Activated CD8-positive, alpha-beta memory T cell treated with anti-CD3 and anti-CD28 coated beads, Interleukin-2, amount 10 ng/mL, durations not matched to agents 7 days and 5 days (primary cell): ENCODE measurements at regions of chr17 and their contacts with region 1.

Region 1: DNA sequence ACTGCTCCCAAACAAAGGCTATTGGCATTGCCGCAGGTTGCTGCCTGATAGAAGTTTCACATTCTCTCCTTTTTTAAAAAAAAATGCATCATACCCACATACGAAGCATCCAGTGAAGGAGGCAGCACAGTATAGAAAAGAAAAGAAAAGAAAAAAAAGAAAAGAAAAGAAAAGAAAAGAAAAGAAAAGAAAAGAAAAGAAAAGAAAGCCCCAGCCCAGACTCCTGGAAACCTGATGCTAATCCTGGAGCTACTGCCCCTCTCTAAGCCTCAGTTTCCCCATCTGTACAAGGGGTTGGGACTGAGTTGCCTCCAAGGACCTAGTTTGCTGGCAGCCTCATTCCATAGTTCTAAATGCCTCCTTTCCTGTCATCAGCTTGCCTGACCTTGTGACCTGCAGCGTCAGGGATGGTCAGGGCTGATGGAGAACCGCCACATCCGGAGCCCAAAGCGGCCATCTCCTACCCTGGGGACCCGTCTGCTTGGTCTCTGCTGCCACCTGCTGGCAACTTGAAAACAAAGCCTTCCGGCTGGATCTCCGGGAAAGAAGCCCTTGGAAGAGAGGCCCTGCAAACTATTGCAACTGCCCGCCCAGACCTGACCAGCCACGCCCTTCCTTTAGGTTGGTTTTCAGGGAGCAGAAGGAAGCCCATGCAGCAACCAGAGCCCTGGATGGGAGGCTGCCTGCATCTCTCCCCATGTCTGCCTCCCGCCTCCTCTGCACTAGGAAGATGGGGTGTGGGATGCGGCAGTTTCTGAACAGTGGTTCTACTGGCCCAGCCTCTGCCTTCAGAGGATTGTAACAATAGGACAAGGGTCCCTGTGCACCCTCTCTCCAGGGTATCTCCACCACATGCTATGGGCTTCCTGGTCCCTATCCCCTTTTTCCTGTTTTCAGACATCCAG is 13.0 kb downstream of the AIPL1 start:
- DNase-seq: peak; percentile 83
- ATAC-seq: peak; percentile 76
- H3K4me3 Mint-ChIP-seq: no peak overlapping the region
- H3K27ac Mint-ChIP-seq: no peak overlapping the region
- H3K4me1 Mint-ChIP-seq: peaks cover 7% of the 10 kb centered on the region
- H3K27me3 Mint-ChIP-seq: peaks cover 63% of the 10 kb centered on the region

Region 2: DNA sequence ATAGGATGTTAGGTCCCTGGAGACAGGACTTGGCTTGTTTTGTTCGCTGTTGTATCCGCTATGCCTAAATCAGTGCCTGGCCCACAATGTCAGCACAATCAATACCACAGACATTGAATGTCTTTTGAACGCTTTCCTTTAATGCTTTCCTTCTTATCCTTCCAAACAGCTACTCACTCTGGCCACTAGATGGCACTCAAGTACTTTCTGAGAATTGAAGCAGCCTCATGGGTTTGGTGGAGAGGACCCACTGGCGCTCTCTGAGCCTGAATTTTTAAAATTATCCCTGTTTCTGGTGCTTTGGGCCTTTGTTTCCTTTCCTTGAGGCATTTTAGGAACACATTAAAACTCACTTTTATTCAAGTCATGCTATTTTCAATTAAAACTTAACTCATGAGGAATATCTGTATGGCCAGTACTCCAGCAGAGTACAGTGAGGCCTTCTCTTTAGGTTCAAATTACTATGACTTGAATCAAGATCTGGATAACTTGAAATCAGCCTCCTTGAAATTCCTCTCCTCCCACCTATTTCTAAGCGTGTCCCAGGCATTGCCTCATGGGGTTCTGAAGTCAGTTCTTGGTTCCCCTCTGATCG is 834.4 kb before region 1 on chr17:
- CTCF ChIA-PET with region 1: interaction called, 11 read pairs
- DNase-seq: peak; percentile 62
- ATAC-seq: no peak
- H3K4me3 Mint-ChIP-seq: no peak overlapping the region
- H3K27ac Mint-ChIP-seq: peak overlapping the region; percentile 42
- H3K4me1 Mint-ChIP-seq: peaks cover 37% of the 10 kb centered on the region
- H3K27me3 Mint-ChIP-seq: peaks cover 15% of the 10 kb centered on the region

Region 3: GRCh38 chr17:6170349-6170748 is 251.6 kb before region 1 on chr17:
- CTCF ChIA-PET with region 1: no interaction called
- DNase-seq: no peak
- ATAC-seq: no peak
- H3K4me3 Mint-ChIP-seq: no peak overlapping the region
- H3K27ac Mint-ChIP-seq: no peak overlapping the region
- H3K4me1 Mint-ChIP-seq: no peaks in the 10 kb centered on the region
- H3K27me3 Mint-ChIP-seq: no peaks in the 10 kb centered on the region

Region 4: DNA sequence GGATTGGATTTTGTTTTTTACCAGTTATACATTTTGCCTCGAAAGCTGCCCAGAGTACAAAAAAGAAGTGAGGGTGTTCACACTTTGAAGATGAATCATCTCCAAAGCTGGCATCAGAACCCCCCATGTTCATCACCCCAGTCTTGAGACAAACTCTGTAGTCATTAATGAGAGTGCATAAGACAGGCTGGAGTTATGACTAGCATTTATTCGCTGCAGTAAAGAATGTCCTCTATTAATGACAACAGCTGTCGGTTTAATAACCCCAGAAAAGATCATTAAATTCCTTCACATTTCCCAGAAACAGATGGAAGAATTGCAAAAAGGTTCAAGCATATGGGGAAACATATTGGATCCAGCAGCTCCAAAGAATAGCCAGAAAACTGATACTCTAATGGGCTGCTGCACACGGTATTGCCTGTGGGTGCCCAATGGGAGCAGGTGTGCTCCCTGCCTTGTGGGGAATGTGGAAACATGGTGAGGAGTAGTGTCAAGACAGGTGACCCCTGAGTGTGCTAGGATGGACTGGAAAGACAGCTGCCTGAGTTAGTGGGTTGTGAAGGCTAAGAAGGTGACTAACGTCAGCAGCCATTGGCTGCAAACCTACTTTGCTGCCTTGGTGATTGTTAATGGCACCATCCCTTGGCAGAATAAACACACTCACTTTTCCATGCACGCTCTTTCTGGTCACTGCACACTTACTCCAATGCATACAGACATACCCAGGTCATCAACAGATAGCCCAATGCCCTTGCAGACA is 69.0 kb before region 1 on chr17:
- CTCF ChIA-PET with region 1: no interaction called
- DNase-seq: no peak
- ATAC-seq: no peak
- H3K4me3 Mint-ChIP-seq: no peak overlapping the region
- H3K27ac Mint-ChIP-seq: no peak overlapping the region
- H3K4me1 Mint-ChIP-seq: no peaks in the 10 kb centered on the region
- H3K27me3 Mint-ChIP-seq: peaks cover 27% of the 10 kb centered on the region

Region 5: DNA sequence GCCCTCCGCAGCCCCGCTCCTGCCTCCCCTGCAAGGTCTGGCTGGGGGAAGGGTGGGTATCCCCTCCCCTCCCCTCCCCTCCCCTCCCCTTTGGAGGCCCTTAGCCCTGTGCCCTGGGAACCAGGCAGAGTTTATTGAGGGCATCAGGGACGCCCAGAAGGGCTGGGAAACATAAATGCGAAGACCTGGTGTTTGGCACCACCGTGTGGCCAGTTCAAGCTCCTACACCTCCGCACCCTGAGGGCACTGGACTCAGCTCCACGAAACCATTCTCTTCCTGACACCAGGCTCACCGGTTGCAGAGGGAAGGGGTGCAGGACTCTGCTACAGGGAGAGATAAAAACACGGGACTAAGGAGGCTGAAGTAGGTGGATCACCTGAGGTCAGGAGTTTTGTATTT is 14.0 kb after region 1 on chr17:
- CTCF ChIA-PET with region 1: interaction called, 16 read pairs
- DNase-seq: peak; percentile 71
- ATAC-seq: peak; percentile 93
- H3K4me3 Mint-ChIP-seq: no peak overlapping the region
- H3K27ac Mint-ChIP-seq: no peak overlapping the region
- H3K4me1 Mint-ChIP-seq: no peaks in the 10 kb centered on the region
- H3K27me3 Mint-ChIP-seq: peaks cover 55% of the 10 kb centered on the region